ENCODE measurements at regions of chr4 and their contacts with region 1.

Region 1: DNA sequence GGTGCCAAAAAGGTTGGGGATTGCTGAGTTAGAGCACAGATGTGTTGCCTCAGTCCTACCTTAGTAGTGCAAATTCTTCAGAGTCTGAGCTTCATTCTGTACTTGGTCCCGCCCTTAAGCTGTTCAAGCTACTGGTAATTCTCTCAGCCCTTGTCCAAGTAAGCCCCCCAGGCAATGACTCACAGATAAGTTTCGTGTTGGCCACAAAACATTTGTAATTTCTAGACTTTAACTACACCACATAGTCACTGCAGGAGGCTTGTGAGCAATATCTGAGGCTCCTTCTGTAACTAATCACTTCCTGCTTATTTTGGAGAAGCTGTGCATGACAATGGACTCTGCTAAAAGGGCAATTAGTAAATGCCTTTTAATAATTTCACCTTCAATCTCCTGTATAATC is 1420.5 kb downstream of the PCDH7 start:
- DNase-seq: peak; percentile 93
- H3K4me3 ChIP-seq: peak overlapping the region in 1 of 3 experiments; percentile 41
- H3K27ac ChIP-seq: peak overlapping the region; percentile 84
- H3K4me1 ChIP-seq: peaks cover 24% of the 10 kb centered on the region
- H3K27me3 ChIP-seq: no peaks in the 10 kb centered on the region
- CTCF ChIP-seq: no peak
- POLR2A ChIP-seq: no peak

Region 2: DNA sequence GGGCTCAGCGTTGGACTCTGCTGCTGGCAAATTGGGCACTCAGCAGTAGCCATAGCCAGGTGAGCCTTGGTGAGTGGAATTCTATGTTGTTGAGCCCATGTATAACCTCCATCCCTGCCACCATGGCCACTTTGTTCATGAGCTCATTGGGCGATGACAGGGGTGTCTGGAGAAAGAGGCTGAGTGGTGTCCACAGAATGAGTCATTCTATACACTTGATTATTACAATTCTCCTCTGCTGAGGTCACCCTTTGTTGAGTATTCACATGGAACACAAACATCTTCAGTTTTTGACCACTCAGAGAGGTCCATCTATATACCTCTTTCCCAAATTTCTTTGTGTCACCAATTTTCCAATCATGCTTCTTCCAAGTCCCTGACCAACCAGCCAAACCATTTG is 78.7 kb before region 1 on chr4:
- CTCF ChIA-PET with region 1: no interaction called
- POLR2A ChIA-PET with region 1: no interaction called
- dilution Hi-C with region 1: no loop called
- intact Hi-C with region 1: no loop called
- DNase-seq: no peak
- H3K4me3 ChIP-seq: no peak overlapping the region
- H3K27ac ChIP-seq: no peak overlapping the region
- H3K4me1 ChIP-seq: no peaks in the 10 kb centered on the region
- H3K27me3 ChIP-seq: no peaks in the 10 kb centered on the region
- CTCF ChIP-seq: no peak
- POLR2A ChIP-seq: no peak

Region 3: GRCh38 chr4:32184186-32184585 is 43.5 kb after region 1 on chr4:
- CTCF ChIA-PET with region 1: interaction called, 5 read pairs
- POLR2A ChIA-PET with region 1: no interaction called
- dilution Hi-C with region 1: no loop called
- intact Hi-C with region 1: loop called (anchors 1 kb)
- DNase-seq: peak; percentile 86
- H3K4me3 ChIP-seq: no peak overlapping the region
- H3K27ac ChIP-seq: no peak overlapping the region
- H3K4me1 ChIP-seq: no peaks in the 10 kb centered on the region
- H3K27me3 ChIP-seq: no peaks in the 10 kb centered on the region
- CTCF ChIP-seq: no peak
- POLR2A ChIP-seq: no peak

Region 4: DNA sequence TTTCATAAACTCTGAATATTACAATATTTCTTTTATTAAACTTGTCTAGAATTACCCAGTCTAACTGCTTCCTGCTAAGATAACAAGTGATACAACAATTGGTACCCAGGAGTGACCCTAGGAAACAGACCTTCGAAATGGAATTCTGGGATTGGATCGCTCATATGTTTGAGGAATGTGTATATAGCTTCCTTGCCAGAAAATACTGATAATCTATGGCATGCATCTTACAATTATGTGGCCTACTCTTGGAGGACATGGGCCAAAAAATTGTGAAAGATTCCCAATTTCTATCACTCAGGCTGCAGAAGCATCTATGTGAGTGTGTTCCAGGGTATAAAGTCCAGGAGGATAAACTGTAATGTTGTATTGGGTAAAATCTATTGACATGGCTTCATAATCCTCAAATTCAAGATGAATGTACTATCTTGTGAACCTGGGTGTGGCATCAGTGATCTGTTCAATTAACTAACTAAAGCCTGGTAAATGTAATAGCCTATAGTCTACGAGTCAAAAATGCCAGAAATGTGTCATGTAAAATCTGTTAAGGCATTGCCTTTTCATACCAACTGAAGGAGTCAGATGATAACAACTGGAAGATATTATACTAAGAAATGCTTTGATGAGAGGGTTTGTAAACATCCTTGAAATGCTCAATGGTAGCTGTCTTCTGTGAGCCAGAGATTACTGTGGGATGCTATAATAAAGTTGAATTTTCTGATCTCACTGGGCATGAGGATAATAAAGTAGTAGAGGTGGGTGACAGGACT is 78.9 kb after region 1 on chr4:
- CTCF ChIA-PET with region 1: no interaction called
- POLR2A ChIA-PET with region 1: no interaction called
- dilution Hi-C with region 1: no loop called
- intact Hi-C with region 1: loop called (anchors 1 kb)
- DNase-seq: peak; percentile 3
- H3K4me3 ChIP-seq: no peak overlapping the region
- H3K27ac ChIP-seq: no peak overlapping the region
- H3K4me1 ChIP-seq: no peaks in the 10 kb centered on the region
- H3K27me3 ChIP-seq: no peaks in the 10 kb centered on the region
- CTCF ChIP-seq: no peak
- POLR2A ChIP-seq: no peak

Region 5: DNA sequence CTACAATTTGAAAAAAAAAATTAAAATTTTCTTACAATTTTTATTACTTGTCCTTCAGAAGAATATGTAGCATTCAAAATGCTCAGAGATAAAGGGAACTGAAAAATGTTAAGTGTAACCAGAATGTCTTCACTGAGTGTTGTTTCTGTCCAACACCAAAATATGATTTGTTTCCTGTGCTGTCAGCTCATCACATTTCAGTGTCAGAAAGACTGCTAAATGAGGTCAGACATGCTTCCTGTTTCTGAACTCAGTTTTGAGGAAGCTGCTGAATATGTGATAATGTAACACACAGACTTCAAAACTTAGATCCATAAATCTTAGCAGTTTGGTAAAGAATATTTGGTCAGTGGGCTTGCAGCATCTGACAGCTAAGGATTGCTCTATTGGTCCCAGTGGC is 429.2 kb after region 1 on chr4:
- CTCF ChIA-PET with region 1: no interaction called
- POLR2A ChIA-PET with region 1: no interaction called
- dilution Hi-C with region 1: no loop called
- intact Hi-C with region 1: no loop called
- DNase-seq: no peak
- H3K4me3 ChIP-seq: no peak overlapping the region
- H3K27ac ChIP-seq: no peak overlapping the region
- H3K4me1 ChIP-seq: no peaks in the 10 kb centered on the region
- H3K27me3 ChIP-seq: no peaks in the 10 kb centered on the region
- CTCF ChIP-seq: no peak
- POLR2A ChIP-seq: no peak

Measured in endothelial cell of umbilical vein (primary cell).